Activated CD8-positive, alpha-beta memory T cell treated with anti-CD3 and anti-CD28 coated beads, Interleukin-2, amount 10 ng/mL, durations not matched to agents 7 days and 5 days (primary cell): ENCODE measurements at regions of chr16 and their contacts with region 1.

Region 1: DNA sequence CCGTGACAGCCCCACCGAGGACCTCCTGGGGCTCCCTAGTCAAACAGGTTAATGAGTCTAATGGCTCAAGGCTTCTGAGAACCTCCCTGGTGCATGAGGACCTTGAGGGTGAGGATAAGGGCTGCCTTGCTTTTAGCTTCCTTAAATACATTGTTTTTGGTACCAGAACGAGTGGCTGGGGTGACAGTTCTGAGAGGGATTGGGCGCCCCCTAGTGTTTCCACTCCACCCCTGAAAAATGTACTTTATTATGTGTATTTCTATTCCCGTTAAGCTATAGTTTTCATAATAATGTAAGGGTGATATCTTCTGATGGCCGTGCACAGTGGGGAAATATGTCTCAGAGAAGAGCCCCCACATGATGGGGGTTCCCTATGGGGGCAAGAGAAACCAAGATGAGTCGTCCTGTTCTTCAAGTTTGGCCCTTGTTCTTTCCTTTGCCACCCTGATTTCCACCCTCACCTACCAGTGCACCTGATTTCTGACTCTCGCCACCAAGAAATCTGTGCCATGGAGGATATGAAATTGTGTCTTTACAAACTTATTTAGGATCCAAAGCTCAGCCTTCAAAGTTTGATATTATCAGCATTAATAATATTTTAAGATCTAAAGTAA is 14.5 kb upstream of the VWA3A start:
- DNase-seq: peak; percentile 79
- ATAC-seq: peak; percentile 58
- H3K4me3 Mint-ChIP-seq: no peak overlapping the region
- H3K27ac Mint-ChIP-seq: no peak overlapping the region
- H3K4me1 Mint-ChIP-seq: peaks cover 2% of the 10 kb centered on the region
- H3K27me3 Mint-ChIP-seq: no peaks in the 10 kb centered on the region

Region 2: DNA sequence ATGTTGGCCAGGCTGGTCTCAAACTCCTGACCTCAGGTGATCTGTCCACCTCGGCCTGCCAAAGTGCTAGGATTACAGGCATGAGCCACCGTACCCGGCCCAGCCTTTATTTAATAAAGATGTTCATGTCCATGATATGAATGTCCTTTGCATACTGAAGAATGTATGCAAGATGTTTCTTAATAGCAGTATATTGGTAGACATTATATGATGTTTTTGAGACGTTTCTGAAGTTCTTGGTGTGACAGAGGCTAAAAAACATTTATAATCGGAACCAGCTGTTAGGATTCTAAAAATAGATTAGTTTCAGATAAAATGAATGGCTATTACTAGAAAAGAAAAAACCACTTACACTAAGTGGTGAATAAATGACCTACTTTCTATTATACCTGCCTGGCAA is 88.7 kb before region 1 on chr16:
- CTCF ChIA-PET with region 1: interaction called, 20 read pairs
- DNase-seq: no peak
- ATAC-seq: no peak
- H3K4me3 Mint-ChIP-seq: no peak overlapping the region
- H3K27ac Mint-ChIP-seq: no peak overlapping the region
- H3K4me1 Mint-ChIP-seq: peaks cover 21% of the 10 kb centered on the region
- H3K27me3 Mint-ChIP-seq: no peaks in the 10 kb centered on the region

Region 3: DNA sequence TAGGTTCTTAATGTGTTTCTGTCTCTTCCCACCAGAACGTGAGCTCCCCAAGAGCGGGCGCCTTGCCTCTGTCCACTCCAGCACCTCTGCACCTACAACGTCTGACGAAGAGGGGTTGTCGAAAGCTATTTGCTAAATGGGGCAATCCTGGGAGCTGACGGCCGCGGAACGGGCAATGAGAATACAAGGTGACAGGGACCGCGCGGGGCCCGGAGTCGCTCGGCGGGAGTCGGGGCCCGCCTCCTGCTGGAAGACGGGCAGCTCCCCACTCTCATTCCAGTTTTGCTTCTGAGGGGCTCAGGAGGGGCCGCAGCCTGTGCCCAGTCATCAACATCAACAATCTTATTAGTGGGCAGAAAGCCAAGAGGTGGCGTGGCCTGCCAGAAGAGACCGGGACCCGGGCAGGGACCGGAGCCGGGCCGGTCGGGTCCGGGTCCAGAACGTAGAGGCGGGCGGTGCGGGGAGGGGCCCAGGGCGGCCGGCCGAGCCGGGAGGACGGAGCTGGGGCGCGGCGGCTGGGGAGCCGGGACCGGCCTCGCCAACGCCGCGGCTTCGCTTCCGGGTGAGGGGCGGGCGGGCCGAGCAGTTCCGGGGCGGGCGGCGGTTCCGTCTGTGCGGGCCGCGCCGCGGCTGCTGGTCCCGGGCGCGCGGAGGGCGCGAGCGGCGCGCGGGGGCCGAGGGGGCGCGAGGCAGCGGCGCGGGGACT is 70.1 kb before region 1 on chr16 and contains the start of gene MOSMO:
- CTCF ChIA-PET with region 1: interaction called, 296 read pairs
- DNase-seq: peak; percentile 73
- ATAC-seq: peak; percentile 96
- H3K4me3 Mint-ChIP-seq: peak within 1 kb of the TSS; percentile 85
- H3K27ac Mint-ChIP-seq: peak within 1 kb of the TSS; percentile 81
- H3K4me1 Mint-ChIP-seq: peaks cover 34% of the 10 kb centered on the region
- H3K27me3 Mint-ChIP-seq: no peaks in the 10 kb centered on the region
- total RNA-seq, gene MOSMO: 10.2 to 12.6 TPM

Region 4: GRCh38 chr16:22063888-22064467 is 13.8 kb before region 1 on chr16:
- CTCF ChIA-PET with region 1: interaction called, 32 read pairs
- DNase-seq: no peak
- ATAC-seq: no peak
- H3K4me3 Mint-ChIP-seq: no peak overlapping the region
- H3K27ac Mint-ChIP-seq: no peak overlapping the region
- H3K4me1 Mint-ChIP-seq: peaks cover 4% of the 10 kb centered on the region
- H3K27me3 Mint-ChIP-seq: no peaks in the 10 kb centered on the region

Region 5: DNA sequence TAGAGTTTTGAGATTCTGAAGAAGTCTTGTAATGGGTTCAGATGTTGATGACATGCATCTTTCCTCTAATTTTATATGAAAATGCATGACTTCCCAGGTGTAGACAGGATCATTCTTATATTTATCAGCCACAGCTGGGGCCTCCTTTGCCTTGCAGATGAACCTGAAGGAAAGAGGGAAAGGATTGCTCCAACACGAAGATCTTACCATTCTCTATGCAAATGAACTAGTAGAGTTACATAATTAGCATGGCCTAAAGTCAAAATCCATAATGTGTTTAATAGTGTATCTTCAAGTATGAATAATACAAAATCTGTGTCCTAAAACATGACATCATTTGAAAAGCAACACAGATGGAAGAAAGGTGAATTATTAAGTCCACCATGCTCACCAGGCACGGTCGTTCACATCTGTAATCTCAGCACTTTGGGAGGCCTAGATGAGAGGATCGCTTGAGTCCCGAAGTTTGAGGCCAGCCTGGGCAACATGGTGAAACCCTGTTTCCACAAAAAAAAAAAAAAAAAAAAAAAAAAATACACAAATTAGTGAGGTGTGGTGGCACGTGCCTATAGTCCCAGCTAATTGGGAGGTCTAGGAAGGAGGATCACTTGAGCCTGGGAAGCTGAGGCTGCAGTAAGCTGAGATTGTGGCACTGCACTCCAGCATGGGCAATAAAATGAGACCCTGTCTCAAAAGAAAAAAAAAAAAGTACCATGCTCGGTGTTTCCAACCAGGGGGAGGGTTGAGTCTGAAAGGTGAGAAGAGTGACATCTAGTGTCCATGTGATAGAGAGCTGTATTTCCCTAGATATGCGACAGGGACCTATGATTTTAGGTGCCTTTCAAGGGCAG is 20.8 kb after region 1 on chr16:
- CTCF ChIA-PET with region 1: interaction called, 21 read pairs
- DNase-seq: no peak
- ATAC-seq: peak; percentile 89
- H3K4me3 Mint-ChIP-seq: no peak overlapping the region
- H3K27ac Mint-ChIP-seq: no peak overlapping the region
- H3K4me1 Mint-ChIP-seq: peaks cover 5% of the 10 kb centered on the region
- H3K27me3 Mint-ChIP-seq: peaks cover 17% of the 10 kb centered on the region